Activated naive CD4-positive, alpha-beta T cell treated with anti-CD3 and anti-CD28 coated beads for 36 hours (primary cell): ENCODE measurements at regions of chr3 and their contacts with region 1.

Region 1: GRCh38 chr3:38117748-38118420 is 19.0 kb downstream of the ACAA1 start:
- DNase-seq: peak; percentile 88
- H3K4me3 Mint-ChIP-seq: no peak overlapping the region
- H3K27ac Mint-ChIP-seq: no peak overlapping the region
- H3K4me1 Mint-ChIP-seq: peaks cover 4% of the 10 kb centered on the region
- H3K27me3 Mint-ChIP-seq: no peaks in the 10 kb centered on the region

Region 2: DNA sequence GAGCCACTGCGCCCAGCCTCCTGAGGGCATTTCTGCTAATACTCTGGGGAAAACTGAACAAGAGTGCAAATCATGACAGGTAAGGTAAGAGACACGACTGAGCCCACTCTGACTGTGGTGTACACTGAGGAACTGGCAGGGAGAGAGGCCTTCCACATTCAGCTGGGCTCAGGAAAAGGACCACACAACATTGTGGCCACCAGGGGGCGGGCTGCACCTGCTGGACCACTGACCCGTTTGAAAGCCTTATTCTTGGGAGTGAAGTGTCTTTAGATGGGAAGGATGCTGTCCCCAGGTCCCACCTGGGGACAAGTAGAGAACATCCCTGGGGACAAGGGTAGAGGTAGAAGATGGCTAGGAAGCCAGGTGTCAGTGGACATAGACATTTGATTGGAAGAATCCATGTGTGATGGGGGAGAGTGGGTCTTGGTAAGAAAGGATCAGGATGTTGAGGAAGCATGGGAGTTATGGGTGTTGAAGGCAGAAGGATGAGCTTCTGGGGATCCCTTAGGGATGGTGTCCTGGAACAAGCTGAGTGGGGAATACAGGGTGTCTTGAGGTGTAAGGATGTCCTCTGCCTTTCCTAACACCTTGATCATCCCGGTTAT is 262.4 kb before region 1 on chr3:
- CTCF ChIA-PET with region 1: no interaction called
- intact Hi-C with region 1: loop called (anchors 10 kb)
- DNase-seq: peak; percentile 88
- H3K4me3 Mint-ChIP-seq: no peak overlapping the region
- H3K27ac Mint-ChIP-seq: no peak overlapping the region
- H3K4me1 Mint-ChIP-seq: peaks cover 6% of the 10 kb centered on the region
- H3K27me3 Mint-ChIP-seq: no peaks in the 10 kb centered on the region

Region 3: GRCh38 chr3:37918627-37919026 is 199.3 kb before region 1 on chr3:
- CTCF ChIA-PET with region 1: no interaction called
- intact Hi-C with region 1: no loop called
- DNase-seq: no peak
- H3K4me3 Mint-ChIP-seq: no peak overlapping the region
- H3K27ac Mint-ChIP-seq: no peak overlapping the region
- H3K4me1 Mint-ChIP-seq: no peaks in the 10 kb centered on the region
- H3K27me3 Mint-ChIP-seq: no peaks in the 10 kb centered on the region

Region 4: DNA sequence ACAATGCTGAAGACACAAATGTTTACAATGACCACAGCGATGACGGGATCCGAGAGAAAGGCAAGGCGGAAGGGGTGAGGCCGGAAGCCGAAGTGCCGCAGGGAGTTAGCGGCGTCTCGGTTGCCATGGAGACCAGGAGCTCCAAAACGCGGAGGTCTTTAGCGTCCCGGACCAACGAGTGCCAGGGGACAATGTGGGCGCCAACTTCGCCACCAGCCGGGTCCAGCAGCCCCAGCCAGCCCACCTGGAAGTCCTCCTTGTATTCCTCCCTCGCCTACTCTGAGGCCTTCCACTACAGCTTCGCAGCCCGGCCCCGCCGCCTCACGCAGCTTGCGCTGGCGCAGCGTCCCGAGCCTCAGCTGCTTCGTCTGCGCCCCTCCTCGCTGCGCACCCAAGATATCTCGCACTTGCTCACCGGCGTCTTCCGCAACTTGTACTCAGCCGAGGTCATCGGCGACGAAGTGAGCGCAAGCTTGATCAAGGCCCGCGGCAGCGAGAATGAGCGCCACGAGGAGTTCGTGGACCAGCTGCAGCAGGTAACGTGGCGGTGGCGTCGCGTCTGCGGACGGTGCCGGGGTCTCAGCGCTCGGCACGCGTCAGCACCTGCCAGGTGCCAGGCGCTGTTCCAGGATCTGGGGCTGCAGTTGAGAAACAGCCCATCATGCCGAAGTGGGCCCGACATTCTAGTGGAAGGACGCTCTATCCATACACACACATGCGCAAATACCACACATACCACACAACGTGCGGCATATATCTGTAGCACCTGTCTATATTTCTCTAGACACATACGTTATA is 78.6 kb before region 1 on chr3 and contains the start of gene DLEC1:
- CTCF ChIA-PET with region 1: no interaction called
- intact Hi-C with region 1: no loop called
- DNase-seq: peak; percentile 88
- H3K4me3 Mint-ChIP-seq: peak within 1 kb of the TSS; percentile 66
- H3K27ac Mint-ChIP-seq: peak within 1 kb of the TSS; percentile 88
- H3K4me1 Mint-ChIP-seq: peaks cover 28% of the 10 kb centered on the region
- H3K27me3 Mint-ChIP-seq: peaks cover 4% of the 10 kb centered on the region
- total RNA-seq, gene DLEC1: 0.17 to 0.19 TPM

Region 5: DNA sequence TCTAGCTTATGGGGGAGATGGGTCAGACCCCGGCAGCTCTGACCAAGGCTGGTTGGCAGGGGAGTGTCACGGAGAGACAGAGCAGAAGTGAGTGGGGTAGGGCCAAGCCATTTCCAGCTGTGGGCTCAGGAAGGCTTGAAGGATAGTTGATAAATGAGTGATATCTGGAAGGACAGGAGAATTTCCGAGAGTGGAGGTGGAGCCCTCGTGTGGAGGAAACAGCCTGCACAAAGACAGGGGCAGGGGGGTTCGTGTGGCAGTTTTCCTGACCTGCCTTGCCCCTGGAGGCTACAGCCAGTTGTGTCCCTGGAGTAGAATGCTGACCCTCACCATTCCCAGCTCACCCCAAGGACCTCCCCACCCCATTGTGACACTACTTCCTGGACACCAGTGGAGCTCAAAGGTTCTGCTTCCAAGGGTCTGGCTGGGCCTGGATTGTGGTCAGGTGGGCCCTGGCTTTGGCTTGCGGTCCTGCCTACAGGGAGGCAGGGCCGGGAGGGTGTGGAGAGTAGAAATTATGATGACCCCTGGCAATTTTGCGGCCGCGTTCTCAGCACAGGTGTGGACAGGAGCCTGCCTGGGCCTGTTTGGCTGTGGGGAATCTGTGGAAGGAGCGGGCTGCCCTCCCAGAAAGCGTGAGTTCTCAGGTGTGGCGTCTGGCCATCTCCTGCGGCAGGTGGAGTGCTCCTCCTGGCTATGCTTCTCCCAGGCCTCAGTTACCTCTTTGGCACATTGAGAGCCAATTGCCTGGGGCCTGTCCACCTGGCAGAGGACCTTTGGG is 164.2 kb after region 1 on chr3 and contains the start of gene SLC22A14:
- CTCF ChIA-PET with region 1: interaction called, 7 read pairs
- intact Hi-C with region 1: loop called (anchors 5 kb)
- DNase-seq: no peak
- H3K4me3 Mint-ChIP-seq: no peak within 1 kb of the TSS
- H3K27ac Mint-ChIP-seq: peak within 1 kb of the TSS; percentile 24
- H3K4me1 Mint-ChIP-seq: no peaks in the 10 kb centered on the region
- H3K27me3 Mint-ChIP-seq: no peaks in the 10 kb centered on the region
- total RNA-seq, gene SLC22A14: not detected

Region 6: DNA sequence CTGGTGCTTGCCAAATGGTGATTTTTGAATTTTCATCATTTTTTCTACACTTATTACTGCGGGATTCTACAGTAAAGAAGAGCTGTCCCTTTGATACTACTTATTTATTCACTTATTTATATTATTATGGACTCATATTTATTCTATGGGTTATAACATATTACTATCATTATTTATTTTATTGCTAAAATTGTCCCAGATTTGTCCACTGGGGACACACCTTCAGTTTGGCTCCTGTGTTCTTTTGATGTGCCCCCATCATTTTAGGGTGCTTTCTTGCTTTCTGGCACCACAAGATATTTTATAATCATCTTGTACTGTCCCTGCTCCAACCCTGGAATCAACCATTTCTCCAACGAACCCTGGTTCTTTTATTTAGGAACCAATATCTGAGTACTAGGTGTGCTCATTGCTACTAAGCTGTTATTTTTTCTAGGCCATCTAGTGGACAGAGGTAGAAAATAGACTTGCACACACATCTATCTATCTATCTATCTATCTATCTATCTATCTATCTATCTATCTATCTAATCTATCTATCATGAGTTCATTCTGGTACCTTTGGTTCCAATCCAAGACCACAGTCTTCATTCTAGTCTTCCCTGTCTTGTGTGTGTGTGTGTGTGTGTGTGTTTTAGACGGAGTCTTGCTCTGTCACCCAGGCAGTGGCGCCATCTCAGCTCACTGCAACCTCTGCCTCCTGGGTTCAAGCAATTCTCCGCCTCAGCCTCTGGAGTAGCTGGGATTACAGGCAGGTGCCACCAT is 180.2 kb after region 1 on chr3:
- CTCF ChIA-PET with region 1: interaction called, 24 read pairs
- intact Hi-C with region 1: loop called (anchors 1 kb)
- DNase-seq: no peak
- H3K4me3 Mint-ChIP-seq: no peak overlapping the region
- H3K27ac Mint-ChIP-seq: no peak overlapping the region
- H3K4me1 Mint-ChIP-seq: no peaks in the 10 kb centered on the region
- H3K27me3 Mint-ChIP-seq: peaks cover 6% of the 10 kb centered on the region

Region 7: GRCh38 chr3:38346587-38347410 is 228.9 kb after region 1 on chr3 and contains the start of gene XYLB:
- CTCF ChIA-PET with region 1: interaction called, 31 read pairs
- intact Hi-C with region 1: loop called (anchors 1 kb)
- DNase-seq: peak; percentile 79
- H3K4me3 Mint-ChIP-seq: peak within 1 kb of the TSS; percentile 72
- H3K27ac Mint-ChIP-seq: no peak within 1 kb of the TSS
- H3K4me1 Mint-ChIP-seq: peaks cover 4% of the 10 kb centered on the region
- H3K27me3 Mint-ChIP-seq: peaks cover 2% of the 10 kb centered on the region
- total RNA-seq, gene XYLB: 2.5 to 2.8 TPM

Region 8: DNA sequence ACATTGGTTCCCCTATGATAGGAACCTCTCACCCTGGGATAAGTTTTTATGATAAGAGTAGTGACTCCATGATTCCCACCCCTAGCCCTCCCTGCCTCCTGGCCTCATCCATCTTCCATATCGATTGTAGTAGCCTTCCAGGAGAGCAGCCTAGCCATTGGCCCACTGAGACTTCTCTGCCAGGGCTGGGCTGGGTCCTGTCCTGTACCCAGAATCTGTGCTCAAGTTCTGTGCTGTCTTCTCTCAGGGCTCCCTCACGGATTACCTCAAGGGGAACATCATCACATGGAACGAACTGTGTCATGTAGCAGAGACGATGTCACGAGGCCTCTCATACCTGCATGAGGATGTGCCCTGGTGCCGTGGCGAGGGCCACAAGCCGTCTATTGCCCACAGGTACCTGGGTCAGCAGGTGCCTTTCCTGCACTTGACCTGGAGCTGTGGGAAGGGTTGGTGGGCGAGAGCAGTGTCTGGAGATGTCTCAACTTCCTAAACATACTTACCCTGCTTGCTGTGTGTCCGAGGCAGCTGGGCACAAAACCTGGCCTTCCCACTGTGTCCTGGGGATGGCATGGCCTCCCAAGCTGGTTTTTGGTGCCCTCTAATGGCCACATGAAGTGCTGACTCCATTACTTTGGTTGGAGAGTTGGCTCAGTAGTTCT is 361.7 kb after region 1 on chr3:
- CTCF ChIA-PET with region 1: interaction called, 9 read pairs
- intact Hi-C with region 1: loop called (anchors 1 kb)
- DNase-seq: peak; percentile 63
- H3K4me3 Mint-ChIP-seq: no peak overlapping the region
- H3K27ac Mint-ChIP-seq: no peak overlapping the region
- H3K4me1 Mint-ChIP-seq: no peaks in the 10 kb centered on the region
- H3K27me3 Mint-ChIP-seq: no peaks in the 10 kb centered on the region